Naive thymus-derived CD4-positive, alpha-beta T cell (primary cell): ENCODE measurements at regions of chr7 and their contacts with region 1.

Region 1: DNA sequence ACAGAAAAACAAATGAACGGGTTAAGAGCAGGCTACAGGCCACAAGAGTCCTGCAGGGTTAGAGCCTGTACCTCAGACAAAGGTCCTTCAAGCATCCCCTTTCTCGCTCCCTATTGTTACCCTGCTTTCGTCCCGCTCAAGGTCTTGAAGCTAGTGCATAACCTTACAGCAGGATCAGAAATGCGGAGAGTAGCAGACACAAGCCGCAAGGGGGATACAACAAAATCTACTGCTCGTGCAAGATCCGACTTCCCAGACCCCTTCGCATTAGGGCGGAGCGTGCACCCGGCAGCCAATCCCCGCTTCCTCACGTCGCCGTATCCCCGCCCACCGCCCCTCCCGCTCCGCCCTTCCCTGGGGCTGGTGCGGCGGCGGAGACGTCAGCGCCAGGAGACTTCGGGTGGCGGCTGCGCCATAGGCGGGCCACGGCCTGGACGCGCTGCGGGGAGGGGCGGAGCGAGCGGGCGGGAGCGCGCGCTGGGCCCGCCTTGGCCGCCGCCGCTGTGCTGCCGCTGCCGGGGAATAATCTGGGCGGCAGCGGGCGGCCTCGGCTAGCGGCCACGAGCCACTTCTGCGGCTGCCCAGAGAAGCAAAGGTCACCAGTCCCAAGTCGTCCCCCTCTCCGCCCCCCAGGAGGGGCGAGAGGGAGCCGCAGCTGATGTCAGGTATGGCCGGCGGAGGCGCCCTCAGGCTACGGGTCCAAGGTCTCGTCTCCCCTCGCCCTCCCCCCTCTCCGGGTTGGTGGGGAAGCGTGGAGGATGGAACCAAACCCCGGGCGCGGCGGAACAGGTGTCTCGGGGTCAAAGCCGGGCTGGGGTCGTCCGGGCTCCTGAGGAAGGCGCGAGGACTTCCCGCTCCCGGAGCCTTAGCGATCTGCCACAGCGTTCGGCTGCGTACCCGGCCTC is at the start of gene C1GALT1:
- DNase-seq: peak; percentile 92 to 98 (median 98)
- ATAC-seq: peak; percentile 93
- H3K4me3 ChIP-seq: peak within 1 kb of the TSS; percentile 91
- H3K4me3 Mint-ChIP-seq: peak within 1 kb of the TSS in 9 of 10 donors; percentile 87 to 97 (median 94)
- H3K27ac ChIP-seq: peak within 1 kb of the TSS; percentile 95
- H3K27ac Mint-ChIP-seq: peak within 1 kb of the TSS; percentile 93 to 100 (median 98)
- H3K4me1 ChIP-seq: peaks cover 22% of the 10 kb centered on the region in 2 donors
- H3K4me1 Mint-ChIP-seq: peaks cover 0 to 14% (median 10%) of the 10 kb centered on the region in 7 donors
- H3K27me3 ChIP-seq: no peaks in the 10 kb centered on the region
- H3K27me3 Mint-ChIP-seq: no peaks in the 10 kb centered on the region
- total RNA-seq, gene C1GALT1: 51.4 to 60.1 (median 55.6) TPM

Region 2: GRCh38 chr7:7103343-7104313 is 78.8 kb before region 1 on chr7:
- CTCF ChIA-PET with region 1: interaction called, 34 read pairs
- POLR2A ChIA-PET with region 1: interaction called, 114 read pairs
- intact Hi-C with region 1: loop called (anchors 1 kb)
- DNase-seq: peak in 7 of 9 donors; percentile 41 to 71 (median 61)
- ATAC-seq: peak; percentile 85
- H3K4me3 ChIP-seq: no peak overlapping the region
- H3K4me3 Mint-ChIP-seq: peak overlapping the region in 1 of 10 donors; percentile 42
- H3K27ac ChIP-seq: no peak overlapping the region
- H3K27ac Mint-ChIP-seq: peak overlapping the region in 3 of 9 donors; percentile 5 to 72 (median 43)
- H3K4me1 ChIP-seq: peaks cover 0 to 17% of the 10 kb centered on the region in 2 donors
- H3K4me1 Mint-ChIP-seq: peaks cover 6 to 31% (median 29%) of the 10 kb centered on the region in 7 donors
- H3K27me3 ChIP-seq: no peaks in the 10 kb centered on the region
- H3K27me3 Mint-ChIP-seq: peaks cover 0 to 9% (median 0%) of the 10 kb centered on the region in 5 donors

Region 3: DNA sequence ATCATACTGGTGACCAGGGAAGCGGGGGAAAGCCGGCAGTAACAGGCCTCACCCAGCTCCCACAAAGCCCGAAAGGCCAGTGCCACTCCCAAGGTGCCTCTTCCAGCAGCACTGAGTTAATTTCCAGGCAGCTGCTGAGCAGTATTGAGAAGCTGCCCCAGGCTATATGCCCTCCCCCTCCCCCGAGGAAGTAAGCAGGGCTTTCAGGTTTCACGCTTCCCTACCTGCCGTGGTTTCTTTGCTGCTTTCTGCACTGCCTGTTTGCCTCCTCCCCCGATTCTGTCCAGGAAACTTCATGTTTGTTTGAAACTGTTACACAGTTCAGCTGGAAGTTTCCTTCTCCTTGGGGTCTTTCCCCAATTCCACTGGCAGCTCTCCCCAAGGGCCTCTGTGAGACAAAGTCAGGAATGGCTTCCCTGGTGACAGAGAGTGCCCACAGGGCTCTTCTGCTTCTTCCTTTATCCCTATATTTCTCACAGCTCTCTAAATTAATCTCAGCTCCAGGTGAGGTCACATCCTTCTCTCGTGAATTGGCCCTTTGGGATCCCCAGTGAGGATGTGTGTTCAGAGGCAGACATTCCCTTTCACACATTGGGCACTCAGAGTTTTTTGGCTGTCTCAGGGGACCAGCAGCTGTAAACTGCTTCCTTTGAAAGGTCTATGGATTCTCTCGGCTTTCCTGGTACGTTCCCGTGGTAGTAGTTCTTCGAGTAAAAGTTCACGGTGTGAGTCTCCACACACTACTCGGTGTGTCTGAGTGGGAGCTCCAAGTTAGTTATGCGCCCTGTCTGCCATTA is 19.4 kb after region 1 on chr7:
- CTCF ChIA-PET with region 1: interaction called, 3 read pairs
- POLR2A ChIA-PET with region 1: interaction called, 6 read pairs
- intact Hi-C with region 1: loop called (anchors 1 to 2 kb)
- DNase-seq: peak; percentile 16 to 63 (median 54)
- ATAC-seq: peak; percentile 91
- H3K4me3 ChIP-seq: peak overlapping the region; percentile 21
- H3K4me3 Mint-ChIP-seq: peak overlapping the region; percentile 56 to 85 (median 78)
- H3K27ac ChIP-seq: peak overlapping the region; percentile 38
- H3K27ac Mint-ChIP-seq: peak overlapping the region; percentile 5 to 90 (median 86)
- H3K4me1 ChIP-seq: peaks cover 30 to 31% of the 10 kb centered on the region in 2 donors
- H3K4me1 Mint-ChIP-seq: peaks cover 60 to 94% (median 84%) of the 10 kb centered on the region in 7 donors
- H3K27me3 ChIP-seq: no peaks in the 10 kb centered on the region
- H3K27me3 Mint-ChIP-seq: no peaks in the 10 kb centered on the region

Region 4: DNA sequence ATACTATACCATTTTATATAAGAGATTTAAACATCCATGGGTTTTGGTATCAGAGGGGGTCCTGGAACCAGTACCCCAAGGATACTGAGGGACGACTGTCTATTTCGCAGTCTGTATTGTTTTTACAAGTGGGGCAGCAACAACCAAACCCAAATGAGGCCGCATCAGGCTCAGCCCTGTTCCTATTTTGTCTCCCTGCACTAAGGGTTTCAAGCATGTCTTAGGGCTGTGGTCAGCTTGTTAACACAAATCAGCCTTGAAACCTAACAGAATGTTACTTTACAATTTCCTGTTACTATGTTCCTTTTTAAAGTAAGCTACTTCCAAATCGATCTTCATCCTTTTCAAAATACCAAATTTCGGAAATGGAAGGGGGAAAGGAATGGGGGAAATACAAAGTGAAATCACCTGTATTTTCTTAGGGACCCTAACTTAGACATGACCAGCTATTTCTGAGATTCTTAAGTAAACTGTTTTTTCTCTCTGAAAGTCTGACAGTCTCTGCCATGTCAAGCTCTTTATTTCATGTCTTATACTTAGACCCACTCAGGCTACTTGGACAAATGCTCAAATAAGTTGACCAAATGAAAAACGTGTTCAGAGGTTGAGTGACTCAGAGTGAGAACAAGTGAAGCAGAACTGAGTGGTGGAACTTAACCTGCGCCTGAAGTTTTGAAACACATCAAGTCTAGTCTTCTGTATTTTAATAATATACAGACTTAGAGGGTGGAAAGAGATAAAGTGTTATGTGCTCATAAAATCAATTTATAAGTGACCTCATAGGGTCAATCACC is 75.7 kb after region 1 on chr7:
- CTCF ChIA-PET with region 1: interaction called, 4 read pairs
- POLR2A ChIA-PET with region 1: interaction called, 6 read pairs
- intact Hi-C with region 1: loop called (anchors 1 kb)
- DNase-seq: no peak
- ATAC-seq: peak; percentile 60
- H3K4me3 ChIP-seq: no peak overlapping the region
- H3K4me3 Mint-ChIP-seq: peak overlapping the region; percentile 46 to 78 (median 71)
- H3K27ac ChIP-seq: peak overlapping the region; percentile 62
- H3K27ac Mint-ChIP-seq: peak overlapping the region; percentile 70 to 92 (median 86)
- H3K4me1 ChIP-seq: peaks cover 14 to 19% of the 10 kb centered on the region in 2 donors
- H3K4me1 Mint-ChIP-seq: peaks cover 10 to 64% (median 49%) of the 10 kb centered on the region in 7 donors
- H3K27me3 ChIP-seq: no peaks in the 10 kb centered on the region
- H3K27me3 Mint-ChIP-seq: no peaks in the 10 kb centered on the region

Region 5: GRCh38 chr7:7566651-7567611 is 384.5 kb after region 1 on chr7 and contains the start of gene MIOS:
- CTCF ChIA-PET with region 1: no interaction called
- POLR2A ChIA-PET with region 1: interaction called, 6 read pairs
- intact Hi-C with region 1: loop called (anchors 1 kb)
- DNase-seq: peak; percentile 73 to 88 (median 83)
- ATAC-seq: peak; percentile 95
- H3K4me3 ChIP-seq: peak within 1 kb of the TSS; percentile 77
- H3K4me3 Mint-ChIP-seq: peak within 1 kb of the TSS in 9 of 10 donors; percentile 75 to 92 (median 86)
- H3K27ac ChIP-seq: peak within 1 kb of the TSS; percentile 98
- H3K27ac Mint-ChIP-seq: peak within 1 kb of the TSS; percentile 80 to 91 (median 85)
- H3K4me1 ChIP-seq: peaks cover 27 to 29% of the 10 kb centered on the region in 2 donors
- H3K4me1 Mint-ChIP-seq: peaks cover 21 to 41% (median 37%) of the 10 kb centered on the region in 7 donors
- H3K27me3 ChIP-seq: no peaks in the 10 kb centered on the region
- H3K27me3 Mint-ChIP-seq: no peaks in the 10 kb centered on the region
- total RNA-seq, gene MIOS: 24.3 to 31.7 (median 28.7) TPM

Region 6: GRCh38 chr7:8125680-8126444 is 943.5 kb after region 1 on chr7:
- CTCF ChIA-PET with region 1: no interaction called
- POLR2A ChIA-PET with region 1: no interaction called
- intact Hi-C with region 1: loop called (anchors 10 kb)
- DNase-seq: peak; percentile 47 to 83 (median 77)
- ATAC-seq: peak; percentile 95
- H3K4me3 ChIP-seq: peak overlapping the region; percentile 9
- H3K4me3 Mint-ChIP-seq: peak overlapping the region; percentile 59 to 83 (median 75)
- H3K27ac ChIP-seq: peak overlapping the region; percentile 70
- H3K27ac Mint-ChIP-seq: peak overlapping the region; percentile 92 to 100 (median 99)
- H3K4me1 ChIP-seq: peaks cover 56 to 69% of the 10 kb centered on the region in 2 donors
- H3K4me1 Mint-ChIP-seq: peaks cover 56 to 88% (median 77%) of the 10 kb centered on the region in 7 donors
- H3K27me3 ChIP-seq: no peaks in the 10 kb centered on the region
- H3K27me3 Mint-ChIP-seq: no peaks in the 10 kb centered on the region